ENCODE measurements at regions of chr6 and their contacts with region 1.

Region 1: DNA sequence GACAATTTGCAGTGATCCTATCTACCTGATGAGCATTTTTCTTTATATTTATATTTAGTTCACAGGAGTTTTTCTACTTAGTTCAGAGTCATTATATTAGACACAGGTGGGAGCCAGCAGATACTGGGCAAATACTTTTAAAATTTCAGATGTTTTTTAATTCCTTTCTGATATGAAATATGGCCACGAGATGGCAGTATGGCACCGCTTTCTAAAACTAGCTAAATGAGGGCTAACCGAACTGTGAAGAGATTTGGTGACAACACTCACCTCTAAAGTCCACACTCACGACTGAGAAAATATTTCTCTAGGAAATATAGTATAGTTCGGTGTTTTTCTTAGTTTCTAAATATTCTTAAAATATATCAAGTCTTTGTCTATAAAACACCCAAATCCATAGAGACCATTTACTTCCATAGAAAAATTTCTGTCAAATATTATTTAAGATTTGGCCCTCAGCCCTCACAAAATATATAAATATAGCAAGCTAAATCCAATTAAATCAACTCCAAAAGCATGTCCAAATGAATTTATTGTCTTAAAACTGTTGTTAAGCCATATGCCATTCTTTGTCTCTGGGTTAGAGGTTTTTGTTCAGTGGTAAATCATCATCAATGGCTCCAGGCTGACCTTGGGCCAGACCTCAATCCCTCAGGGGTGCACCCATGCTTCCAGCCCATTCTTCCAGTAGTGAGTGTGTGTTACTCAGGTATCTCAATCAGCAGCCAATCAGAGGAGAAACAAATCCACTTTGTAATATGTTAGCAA is 63.6 kb downstream of the HUS1B start:
- DNase-seq: peak; percentile 52 to 65 (median 59)
- H3K4me3 ChIP-seq: no peak overlapping the region
- H3K4me3 Mint-ChIP-seq: no peak overlapping the region
- H3K27ac ChIP-seq: no peak overlapping the region
- H3K27ac Mint-ChIP-seq: peak overlapping the region in 2 of 7 donors; percentile 8 to 13
- H3K4me1 ChIP-seq: no peaks in the 10 kb centered on the region
- H3K4me1 Mint-ChIP-seq: peaks cover 0 to 4% (median 3%) of the 10 kb centered on the region in 4 donors
- H3K27me3 ChIP-seq: no peaks in the 10 kb centered on the region
- H3K27me3 Mint-ChIP-seq: no peaks in the 10 kb centered on the region

Region 2: GRCh38 chr6:498795-499231 is 94.5 kb before region 1 on chr6:
- CTCF ChIA-PET with region 1: no interaction called
- POLR2A ChIA-PET with region 1: no interaction called
- intact Hi-C with region 1: no loop called
- DNase-seq: peak in 1 of 5 donors; percentile 70
- H3K4me3 ChIP-seq: peak overlapping the region in 1 of 2 donors; percentile 25
- H3K4me3 Mint-ChIP-seq: peak overlapping the region; percentile 55 to 83 (median 76)
- H3K27ac ChIP-seq: peak overlapping the region; percentile 19
- H3K27ac Mint-ChIP-seq: peak overlapping the region; percentile 19 to 94 (median 84)
- H3K4me1 ChIP-seq: peaks cover 51% of the 10 kb centered on the region
- H3K4me1 Mint-ChIP-seq: peaks cover 45 to 70% (median 59%) of the 10 kb centered on the region in 4 donors
- H3K27me3 ChIP-seq: no peaks in the 10 kb centered on the region
- H3K27me3 Mint-ChIP-seq: no peaks in the 10 kb centered on the region

Region 3: GRCh38 chr6:540490-540889 is 52.8 kb before region 1 on chr6:
- CTCF ChIA-PET with region 1: no interaction called
- POLR2A ChIA-PET with region 1: no interaction called
- intact Hi-C with region 1: no loop called
- DNase-seq: no peak
- H3K4me3 ChIP-seq: no peak overlapping the region
- H3K4me3 Mint-ChIP-seq: no peak overlapping the region
- H3K27ac ChIP-seq: no peak overlapping the region
- H3K27ac Mint-ChIP-seq: no peak overlapping the region
- H3K4me1 ChIP-seq: no peaks in the 10 kb centered on the region
- H3K4me1 Mint-ChIP-seq: peaks cover 0 to 1% (median 0%) of the 10 kb centered on the region in 4 donors
- H3K27me3 ChIP-seq: no peaks in the 10 kb centered on the region
- H3K27me3 Mint-ChIP-seq: no peaks in the 10 kb centered on the region

Region 4: GRCh38 chr6:582370-582769 is 11.0 kb before region 1 on chr6:
- CTCF ChIA-PET with region 1: interaction called, 31 read pairs
- POLR2A ChIA-PET with region 1: no interaction called
- intact Hi-C with region 1: no loop called
- DNase-seq: no peak
- H3K4me3 ChIP-seq: no peak overlapping the region
- H3K4me3 Mint-ChIP-seq: peak overlapping the region in 1 of 8 donors; percentile 36
- H3K27ac ChIP-seq: no peak overlapping the region
- H3K27ac Mint-ChIP-seq: peak overlapping the region in 2 of 7 donors; percentile 15 to 52
- H3K4me1 ChIP-seq: peaks cover 8% of the 10 kb centered on the region
- H3K4me1 Mint-ChIP-seq: peaks cover 3 to 15% (median 7%) of the 10 kb centered on the region in 4 donors
- H3K27me3 ChIP-seq: no peaks in the 10 kb centered on the region
- H3K27me3 Mint-ChIP-seq: no peaks in the 10 kb centered on the region

Region 5: GRCh38 chr6:617445-618100 is 24.2 kb after region 1 on chr6:
- CTCF ChIA-PET with region 1: interaction called, 11 read pairs
- POLR2A ChIA-PET with region 1: interaction called, 3 read pairs
- intact Hi-C with region 1: no loop called
- DNase-seq: peak in 4 of 5 donors; percentile 2 to 25 (median 8)
- H3K4me3 ChIP-seq: no peak overlapping the region
- H3K4me3 Mint-ChIP-seq: no peak overlapping the region
- H3K27ac ChIP-seq: no peak overlapping the region
- H3K27ac Mint-ChIP-seq: peak overlapping the region in 3 of 7 donors; percentile 3 to 38 (median 13)
- H3K4me1 ChIP-seq: no peaks in the 10 kb centered on the region
- H3K4me1 Mint-ChIP-seq: peaks cover 0 to 10% (median 7%) of the 10 kb centered on the region in 4 donors
- H3K27me3 ChIP-seq: no peaks in the 10 kb centered on the region
- H3K27me3 Mint-ChIP-seq: no peaks in the 10 kb centered on the region

Region 6: DNA sequence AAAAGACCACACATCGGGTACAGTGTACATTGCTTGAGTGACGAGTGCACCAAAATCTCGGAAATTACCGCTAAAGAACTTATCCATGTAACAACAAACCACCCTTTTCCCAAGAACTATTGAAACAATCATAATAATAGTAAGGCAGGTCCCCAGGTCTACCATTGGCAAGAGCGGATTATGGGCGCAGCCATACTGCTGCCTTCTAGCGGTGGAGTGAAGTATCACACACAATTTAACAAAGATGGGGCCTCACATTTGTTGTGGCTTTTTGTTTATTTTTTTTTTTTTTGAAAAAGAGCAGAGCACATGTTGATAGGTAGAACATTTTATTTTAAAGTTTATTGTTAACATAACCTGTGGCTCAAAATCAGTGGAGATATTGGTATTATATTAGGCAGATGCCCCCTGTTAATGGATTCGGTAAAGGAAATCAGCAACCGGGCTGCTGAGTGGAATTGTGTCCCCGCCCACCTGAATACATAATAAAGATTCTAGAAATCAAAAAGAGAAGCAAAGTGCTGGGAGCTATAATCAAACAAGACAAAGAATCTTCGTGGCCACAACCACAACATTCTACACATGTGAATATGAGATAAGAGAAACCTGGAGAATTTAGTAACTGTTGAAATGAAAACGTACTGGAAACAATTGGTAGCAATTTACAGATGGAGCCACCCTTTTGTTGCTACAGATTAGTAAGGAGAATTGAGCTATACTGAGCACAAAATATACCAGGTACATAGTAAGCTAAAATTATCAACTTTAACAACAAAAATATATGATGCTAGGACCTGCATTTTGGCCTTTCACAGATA is 193.8 kb after region 1 on chr6:
- CTCF ChIA-PET with region 1: interaction called, 12 read pairs
- POLR2A ChIA-PET with region 1: no interaction called
- intact Hi-C with region 1: loop called (anchors 1 kb)
- DNase-seq: peak in 4 of 5 donors; percentile 9 to 22 (median 14)
- H3K4me3 ChIP-seq: no peak overlapping the region
- H3K4me3 Mint-ChIP-seq: no peak overlapping the region
- H3K27ac ChIP-seq: no peak overlapping the region
- H3K27ac Mint-ChIP-seq: no peak overlapping the region
- H3K4me1 ChIP-seq: peaks cover 5% of the 10 kb centered on the region
- H3K4me1 Mint-ChIP-seq: peaks cover 6 to 8% (median 7%) of the 10 kb centered on the region in 4 donors
- H3K27me3 ChIP-seq: peaks cover 6% of the 10 kb centered on the region
- H3K27me3 Mint-ChIP-seq: peaks cover 5 to 7% of the 10 kb centered on the region in 2 donors

Region 7: DNA sequence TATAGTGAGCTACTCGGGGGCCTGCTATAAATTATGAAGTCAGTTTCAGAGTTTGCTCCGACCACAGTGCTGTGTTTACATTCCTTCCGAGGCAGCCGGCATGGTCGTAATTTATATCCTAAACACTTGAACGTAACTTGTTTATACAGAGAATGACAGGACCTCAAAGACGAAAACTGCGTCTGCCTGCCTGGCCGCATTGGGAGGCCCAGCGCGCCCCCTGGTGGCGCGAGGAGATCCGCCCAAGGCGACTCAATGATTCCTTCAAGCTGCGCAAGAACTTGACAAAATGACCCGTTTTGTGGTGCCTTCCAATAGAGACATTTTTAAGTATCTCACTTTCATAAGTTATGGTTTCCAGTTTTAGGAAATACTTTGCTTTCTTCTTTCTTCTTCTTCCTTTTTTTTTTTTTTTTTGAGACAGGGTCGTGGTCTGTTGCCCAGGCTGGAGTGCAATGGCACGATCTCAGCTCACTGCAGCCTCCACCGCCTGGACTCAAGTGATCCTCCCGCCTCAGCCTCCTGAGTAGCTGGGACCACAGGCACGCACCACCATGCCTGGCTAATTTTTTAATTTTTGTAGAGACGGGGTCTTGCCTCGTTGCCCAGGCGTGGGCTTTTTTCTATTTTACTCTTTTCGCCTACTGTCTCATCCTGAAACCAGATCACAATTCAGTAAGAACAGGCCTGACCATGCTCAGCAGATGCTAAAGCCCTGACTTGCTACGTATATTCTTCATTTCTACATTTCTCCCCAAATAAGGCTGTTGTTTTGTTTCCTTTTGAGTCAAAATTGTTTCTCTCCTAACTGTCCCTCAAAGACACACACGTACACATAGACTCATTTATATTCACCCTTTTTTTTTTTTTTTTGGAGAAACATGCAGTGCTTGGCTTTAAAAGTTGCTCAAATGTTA is 803.9 kb after region 1 on chr6:
- CTCF ChIA-PET with region 1: interaction called, 88 read pairs
- POLR2A ChIA-PET with region 1: no interaction called
- intact Hi-C with region 1: loop called (anchors 1 kb)
- DNase-seq: peak; percentile 54 to 63 (median 60)
- H3K4me3 ChIP-seq: no peak overlapping the region
- H3K4me3 Mint-ChIP-seq: peak overlapping the region in 5 of 8 donors; percentile 0 to 62 (median 31)
- H3K27ac ChIP-seq: no peak overlapping the region
- H3K27ac Mint-ChIP-seq: peak overlapping the region in 2 of 7 donors; percentile 30 to 37
- H3K4me1 ChIP-seq: no peaks in the 10 kb centered on the region
- H3K4me1 Mint-ChIP-seq: peaks cover 5 to 18% (median 10%) of the 10 kb centered on the region in 4 donors
- H3K27me3 ChIP-seq: peaks cover 24% of the 10 kb centered on the region
- H3K27me3 Mint-ChIP-seq: peaks cover 42 to 49% of the 10 kb centered on the region in 2 donors

Measured in CD4-positive, alpha-beta memory T cell (primary cell).